Calu3 (cell line): ENCODE measurements at regions of chr7 and their contacts with region 1.

Region 1: GRCh38 chr7:15720849-15721471 is 34.5 kb upstream of the MEOX2 start:
- DNase-seq: peak; percentile 62
- H3K4me3 Mint-ChIP-seq: no peak overlapping the region
- H3K27ac Mint-ChIP-seq: no peak overlapping the region
- H3K4me1 Mint-ChIP-seq: peaks cover 22% of the 10 kb centered on the region
- H3K27me3 Mint-ChIP-seq: no peaks in the 10 kb centered on the region
- CTCF ChIP-seq: peak; percentile 85

Region 2: GRCh38 chr7:15305002-15305600 is 415.9 kb before region 1 on chr7:
- CTCF ChIA-PET with region 1: interaction called, 3 read pairs
- intact Hi-C with region 1: loop called (anchors 1 kb)
- DNase-seq: peak; percentile 78
- H3K4me3 Mint-ChIP-seq: no peak overlapping the region
- H3K27ac Mint-ChIP-seq: no peak overlapping the region
- H3K4me1 Mint-ChIP-seq: no peaks in the 10 kb centered on the region
- H3K27me3 Mint-ChIP-seq: no peaks in the 10 kb centered on the region
- CTCF ChIP-seq: peak; percentile 68

Region 3: GRCh38 chr7:15358112-15358511 is 362.8 kb before region 1 on chr7:
- CTCF ChIA-PET with region 1: no interaction called
- intact Hi-C with region 1: no loop called
- DNase-seq: no peak
- H3K4me3 Mint-ChIP-seq: no peak overlapping the region
- H3K27ac Mint-ChIP-seq: no peak overlapping the region
- H3K4me1 Mint-ChIP-seq: no peaks in the 10 kb centered on the region
- H3K27me3 Mint-ChIP-seq: no peaks in the 10 kb centered on the region
- CTCF ChIP-seq: no peak

Region 4: DNA sequence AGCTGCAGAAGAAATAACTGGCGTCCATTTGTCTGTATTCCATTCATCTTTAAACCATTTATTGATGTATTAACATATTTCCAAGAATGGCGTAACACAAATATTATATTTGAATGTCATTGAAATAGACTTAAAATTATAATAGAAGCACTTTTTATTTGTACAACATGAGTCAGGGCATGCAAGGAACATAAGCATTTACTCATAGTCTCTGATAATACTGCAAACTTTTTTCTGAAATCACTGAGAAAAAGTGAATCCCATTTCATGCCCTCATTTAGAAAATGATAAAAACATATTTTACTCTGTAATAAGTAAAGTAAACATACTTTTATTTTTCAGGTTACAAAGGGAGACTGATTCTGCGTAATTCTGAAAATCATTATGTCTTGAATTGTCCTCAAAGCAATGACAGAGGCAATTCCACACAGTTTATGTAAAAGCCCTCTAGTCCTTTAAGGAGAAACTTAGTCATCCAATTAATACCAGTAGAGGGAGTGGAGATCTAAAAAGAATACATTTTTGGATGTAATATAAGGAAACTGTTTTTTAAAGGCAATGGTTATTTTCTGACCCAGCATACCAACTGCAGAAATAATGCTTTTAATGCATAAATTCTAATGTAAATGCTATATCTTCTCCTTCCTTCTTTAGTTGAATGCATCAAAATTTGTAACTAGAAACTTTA is 217.2 kb before region 1 on chr7:
- CTCF ChIA-PET with region 1: no interaction called
- intact Hi-C with region 1: loop called (anchors 5 kb)
- DNase-seq: no peak
- H3K4me3 Mint-ChIP-seq: no peak overlapping the region
- H3K27ac Mint-ChIP-seq: no peak overlapping the region
- H3K4me1 Mint-ChIP-seq: no peaks in the 10 kb centered on the region
- H3K27me3 Mint-ChIP-seq: no peaks in the 10 kb centered on the region
- CTCF ChIP-seq: peak; percentile 25

Region 5: GRCh38 chr7:15764851-15765382 is 44.0 kb after region 1 on chr7:
- CTCF ChIA-PET with region 1: no interaction called
- intact Hi-C with region 1: loop called (anchors 2 kb)
- DNase-seq: peak; percentile 28
- H3K4me3 Mint-ChIP-seq: no peak overlapping the region
- H3K27ac Mint-ChIP-seq: no peak overlapping the region
- H3K4me1 Mint-ChIP-seq: peaks cover 25% of the 10 kb centered on the region
- H3K27me3 Mint-ChIP-seq: no peaks in the 10 kb centered on the region
- CTCF ChIP-seq: no peak